IMR-90 (cell line): ENCODE measurements at regions of chr9 and their contacts with region 1.

Region 1: DNA sequence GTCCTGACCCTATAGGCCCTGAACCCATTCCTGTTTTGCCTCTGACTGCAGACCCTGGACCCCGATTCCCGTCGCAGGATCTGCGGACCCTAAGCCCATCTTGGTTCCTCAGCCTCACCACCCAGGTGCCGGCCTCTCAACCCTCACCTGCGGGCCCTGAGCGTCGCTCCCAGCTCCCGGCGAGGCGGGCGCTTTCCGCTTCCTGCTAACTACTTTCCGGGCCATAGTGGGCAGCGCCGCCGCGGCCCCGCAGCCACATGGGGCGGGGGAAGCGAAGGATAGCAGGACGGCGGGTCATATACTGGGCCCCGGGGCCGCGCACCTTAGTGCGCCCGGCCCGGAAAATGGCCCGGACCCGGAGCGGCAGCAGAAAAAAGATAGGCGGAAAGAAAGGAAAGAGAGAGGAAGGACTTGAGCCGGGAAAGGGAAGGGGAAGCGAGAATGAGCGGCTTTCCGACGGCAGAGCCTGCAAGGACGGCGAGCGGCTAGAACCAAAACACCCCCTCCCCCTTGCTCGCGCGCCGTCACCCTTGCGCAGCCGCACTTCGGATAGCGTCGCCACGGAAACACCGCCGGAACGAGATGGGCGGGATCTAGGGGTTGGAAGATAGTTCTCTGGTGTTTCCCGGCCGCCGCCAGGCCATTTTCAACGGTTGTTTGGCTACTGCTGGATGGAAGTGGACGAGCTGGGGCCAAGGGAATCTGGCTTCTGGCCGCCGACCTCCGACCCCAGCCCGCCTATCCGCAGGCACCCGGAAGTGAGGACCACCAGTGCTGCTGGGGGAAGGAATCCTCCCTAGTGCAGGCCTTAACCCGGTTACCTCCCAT is at the start of gene DCAF12:
- DNase-seq: peak; percentile 87
- ATAC-seq: peak; percentile 96
- H3K4me3 ChIP-seq: peak within 1 kb of the TSS; percentile 64
- H3K27ac ChIP-seq: peak within 1 kb of the TSS; percentile 96
- H3K4me1 ChIP-seq: peaks cover 8% of the 10 kb centered on the region
- H3K27me3 ChIP-seq: no peaks in the 10 kb centered on the region
- CTCF ChIP-seq: no peak
- POLR2A ChIP-seq: peak; percentile 70
- RAD21 ChIP-seq: no peak; the same call in 1 of the 2 replicates
- total RNA-seq, gene DCAF12: 6.9 and 7.2 TPM in 2 replicates

Region 2: GRCh38 chr9:34178520-34179212 is 52.2 kb after region 1 on chr9 and contains the start of gene UBAP1:
- CTCF ChIA-PET with region 1: no interaction called
- POLR2A ChIA-PET with region 1: no interaction called
- dilution Hi-C with region 1: no loop called
- in situ Hi-C with region 1: no loop called
- intact Hi-C with region 1: loop called (anchors 1 kb)
- DNase-seq: peak; percentile 97
- ATAC-seq: peak; percentile 99
- H3K4me3 ChIP-seq: peak within 1 kb of the TSS; percentile 64
- H3K27ac ChIP-seq: peak within 1 kb of the TSS; percentile 93
- H3K4me1 ChIP-seq: no peaks in the 10 kb centered on the region
- H3K27me3 ChIP-seq: no peaks in the 10 kb centered on the region
- CTCF ChIP-seq: no peak
- POLR2A ChIP-seq: peak; percentile 92
- RAD21 ChIP-seq: no peak
- total RNA-seq, gene UBAP1: 28.3 and 30.6 TPM in 2 replicates

Region 3: DNA sequence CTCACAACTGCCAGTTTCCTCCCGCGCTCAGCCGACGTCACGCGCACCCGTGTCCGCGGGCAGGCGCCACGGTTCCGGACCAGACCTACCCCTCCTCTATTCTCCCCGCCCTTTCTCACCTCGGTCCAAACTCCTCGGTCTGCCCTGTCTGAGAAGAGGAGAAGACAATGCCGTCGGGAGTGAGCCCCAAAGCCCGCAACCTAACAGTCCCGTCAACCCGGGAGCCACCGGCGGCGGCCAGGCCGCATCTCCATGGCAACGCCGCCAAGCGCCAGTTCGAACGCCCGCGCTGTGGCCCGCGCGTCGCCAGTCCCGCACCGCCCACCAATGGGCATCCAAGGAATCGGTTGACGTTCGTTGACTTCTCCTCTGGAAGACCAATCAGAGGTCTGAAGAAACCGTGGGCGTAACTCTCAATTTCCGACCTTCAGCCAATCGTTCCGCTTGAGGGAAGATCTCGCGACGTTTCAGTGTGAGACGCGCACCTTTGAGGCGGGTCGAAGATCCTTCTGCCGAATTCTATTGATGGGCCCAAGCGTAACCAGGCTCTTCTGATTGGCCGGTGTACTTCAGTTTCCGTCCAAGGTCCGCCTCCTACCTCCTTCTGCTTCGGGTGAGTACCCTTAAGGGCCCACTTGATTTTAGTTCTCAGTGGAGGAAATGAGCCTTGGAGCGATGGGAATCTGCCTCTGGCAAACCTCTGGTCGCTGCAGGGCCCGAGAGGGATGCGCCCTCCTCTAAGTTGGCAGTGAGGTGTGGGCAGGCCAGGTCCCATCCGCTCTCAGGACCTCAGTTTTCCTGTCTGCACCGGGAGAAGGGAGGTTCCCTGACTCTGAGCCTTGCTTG is 202.8 kb after region 1 on chr9 and contains the starts of genes KIF24 and NUDT2:
- CTCF ChIA-PET with region 1: no interaction called
- POLR2A ChIA-PET with region 1: no interaction called
- dilution Hi-C with region 1: no loop called
- in situ Hi-C with region 1: no loop called
- intact Hi-C with region 1: loop called (anchors 10 kb)
- DNase-seq: peak; percentile 100
- ATAC-seq: peak; percentile 95
- H3K4me3 ChIP-seq: peak within 1 kb of the TSS; percentile 80
- H3K27ac ChIP-seq: peak within 1 kb of the TSS; percentile 93
- H3K4me1 ChIP-seq: peaks cover 8% of the 10 kb centered on the region
- H3K27me3 ChIP-seq: no peaks in the 10 kb centered on the region
- CTCF ChIP-seq: 0 out of 2 replicates have a peak, but pooled peaks have one; percentile 6
- POLR2A ChIP-seq: peak; percentile 94
- RAD21 ChIP-seq: no peak
- total RNA-seq, gene KIF24: 2.5 and 3.0 TPM in 2 replicates
- total RNA-seq, gene NUDT2: 33.9 and 45.0 TPM in 2 replicates

Region 4: DNA sequence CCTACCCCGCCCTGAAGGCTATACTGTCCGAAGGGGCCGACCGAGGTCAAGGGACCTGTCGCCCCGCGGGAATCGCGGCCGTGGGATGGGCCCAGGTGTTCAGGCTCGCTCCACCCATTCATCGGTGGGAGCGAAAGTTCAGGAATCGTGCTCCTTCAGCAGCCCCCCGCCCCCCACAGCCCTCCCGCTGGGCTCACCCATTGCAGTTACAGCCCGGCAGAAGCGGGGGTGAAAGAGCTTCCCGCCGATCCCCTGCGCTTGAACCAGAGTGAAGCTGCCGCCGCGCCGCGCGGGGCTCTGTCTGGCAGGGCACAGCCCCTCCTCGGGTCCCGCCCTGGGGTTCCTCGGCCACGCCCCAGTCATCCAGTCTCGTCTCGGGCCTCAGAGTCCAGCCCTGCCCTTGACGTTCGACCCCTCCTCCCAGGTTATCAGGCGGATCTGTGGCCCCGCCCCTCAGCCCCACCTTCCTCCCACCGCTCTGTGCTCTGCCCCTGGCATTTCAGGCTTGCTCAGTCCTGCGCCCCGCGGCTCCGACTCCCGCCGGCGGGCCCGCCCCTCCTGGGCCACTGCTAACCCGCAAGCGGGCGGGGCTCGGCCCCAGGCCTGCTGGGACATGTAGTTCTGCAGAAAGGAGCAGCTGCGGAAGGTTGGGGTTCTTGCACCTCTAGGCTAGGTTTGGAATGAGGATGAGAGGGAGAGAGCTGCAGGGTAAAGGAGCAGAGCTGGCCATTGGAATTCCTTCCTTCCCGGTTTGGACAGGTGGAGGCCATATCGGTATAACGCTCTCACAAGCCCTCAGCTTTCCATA is 250.4 kb after region 1 on chr9 and contains the start of gene MYORG:
- CTCF ChIA-PET with region 1: no interaction called
- POLR2A ChIA-PET with region 1: no interaction called
- dilution Hi-C with region 1: no loop called
- in situ Hi-C with region 1: no loop called
- intact Hi-C with region 1: loop called (anchors 1 kb)
- DNase-seq: peak; percentile 65
- ATAC-seq: peak; percentile 84
- H3K4me3 ChIP-seq: peak within 1 kb of the TSS; percentile 54
- H3K27ac ChIP-seq: no peak within 1 kb of the TSS
- H3K4me1 ChIP-seq: peaks cover 8% of the 10 kb centered on the region
- H3K27me3 ChIP-seq: peaks cover 17% of the 10 kb centered on the region; the same call in 1 of the 2 replicates
- CTCF ChIP-seq: no peak
- POLR2A ChIP-seq: no peak
- RAD21 ChIP-seq: no peak
- total RNA-seq, gene MYORG: 0.36 and 0.56 TPM in 2 replicates

Region 5: GRCh38 chr9:34675048-34675714 is 548.8 kb after region 1 on chr9:
- CTCF ChIA-PET with region 1: no interaction called
- POLR2A ChIA-PET with region 1: no interaction called
- dilution Hi-C with region 1: no loop called
- in situ Hi-C with region 1: no loop called
- intact Hi-C with region 1: no loop called
- DNase-seq: peak; percentile 59
- ATAC-seq: peak; percentile 96
- H3K4me3 ChIP-seq: no peak overlapping the region
- H3K27ac ChIP-seq: no peak overlapping the region
- H3K4me1 ChIP-seq: no peaks in the 10 kb centered on the region
- H3K27me3 ChIP-seq: no peaks in the 10 kb centered on the region
- CTCF ChIP-seq: peak; percentile 94
- POLR2A ChIP-seq: no peak
- RAD21 ChIP-seq: peak; percentile 70